Mammary epithelial cell (primary cell): ENCODE measurements at regions of chr2 and their contacts with region 1.

Region 1: DNA sequence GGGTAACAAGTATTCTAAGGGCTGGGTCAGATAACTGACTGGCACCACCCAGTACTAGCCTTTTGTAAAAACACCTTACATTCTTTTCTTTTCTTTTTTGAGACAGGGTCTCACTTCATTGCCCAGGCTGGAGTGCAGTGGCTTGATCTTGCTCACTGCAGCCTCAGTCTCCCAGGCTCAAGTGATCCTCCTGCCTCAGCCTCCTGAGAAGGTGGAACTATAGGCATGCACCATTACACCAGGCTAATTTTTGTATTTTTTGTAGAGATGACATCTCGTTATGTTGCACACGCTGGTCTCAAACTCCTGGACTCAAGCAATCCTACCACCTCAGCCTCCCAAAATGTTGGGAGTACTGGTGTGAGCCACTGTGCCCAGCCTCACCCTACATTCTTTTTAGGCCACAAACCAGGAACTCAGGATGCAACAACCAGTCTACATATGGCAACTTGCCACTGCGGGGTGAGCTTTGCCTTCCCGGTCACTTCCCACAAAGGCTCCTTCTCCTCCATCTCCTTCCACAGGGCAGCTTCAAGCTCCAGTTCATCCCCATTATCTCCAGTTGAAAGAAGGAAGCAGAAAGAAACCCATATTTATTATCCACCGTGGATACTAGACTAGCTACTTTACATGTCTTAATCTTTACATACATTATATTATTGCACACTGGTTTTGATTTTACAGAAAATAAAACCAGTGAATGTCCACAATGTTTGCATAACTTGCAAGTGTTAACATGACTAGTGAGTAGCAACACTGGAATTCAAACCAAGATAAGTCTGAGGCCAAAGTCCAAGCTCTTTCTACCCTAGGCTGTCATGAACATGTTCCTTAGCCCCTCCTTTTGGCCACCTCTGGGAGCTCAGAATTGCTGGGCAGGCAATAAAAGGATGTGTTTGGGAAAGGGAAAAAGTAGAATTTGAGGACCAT is 23.7 kb upstream of the AP1S3 start:
- DNase-seq: peak; percentile 94
- H3K4me3 ChIP-seq: peak overlapping the region in 2 of 3 experiments; percentile 20 to 26
- H3K27ac ChIP-seq: peak overlapping the region; percentile 89
- H3K4me1 ChIP-seq: peaks cover 19% of the 10 kb centered on the region
- H3K27me3 ChIP-seq: no peaks in the 10 kb centered on the region
- CTCF ChIP-seq: peak; percentile 9 to 50

Region 2: DNA sequence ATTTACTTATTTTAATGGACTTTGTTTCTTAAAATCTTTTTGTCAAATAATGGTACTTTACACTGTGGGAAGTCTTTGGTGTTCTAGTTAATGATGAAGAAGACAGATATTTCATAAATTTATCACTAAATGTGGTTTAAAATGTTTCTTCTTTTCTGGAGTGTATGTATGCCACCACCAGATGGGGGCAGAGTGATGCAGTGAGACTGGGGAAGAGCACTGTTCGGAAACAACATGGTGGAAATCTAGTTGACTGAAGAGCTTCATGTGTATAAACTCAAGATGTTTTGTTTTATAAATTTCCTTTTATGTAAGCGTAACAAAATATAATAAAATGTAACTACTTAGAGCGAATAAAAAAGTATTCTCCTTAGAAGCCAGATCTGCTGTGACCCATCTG is 613.9 kb before region 1 on chr2:
- CTCF ChIA-PET with region 1: no interaction called
- dilution Hi-C with region 1: no loop called
- in situ Hi-C with region 1: no loop called
- intact Hi-C with region 1: loop called (anchors 2 kb)
- DNase-seq: peak; percentile 24
- H3K4me3 ChIP-seq: no peak overlapping the region
- H3K27ac ChIP-seq: no peak overlapping the region
- H3K4me1 ChIP-seq: no peaks in the 10 kb centered on the region
- H3K27me3 ChIP-seq: no peaks in the 10 kb centered on the region
- CTCF ChIP-seq: peak; percentile 62 to 73

Region 3: DNA sequence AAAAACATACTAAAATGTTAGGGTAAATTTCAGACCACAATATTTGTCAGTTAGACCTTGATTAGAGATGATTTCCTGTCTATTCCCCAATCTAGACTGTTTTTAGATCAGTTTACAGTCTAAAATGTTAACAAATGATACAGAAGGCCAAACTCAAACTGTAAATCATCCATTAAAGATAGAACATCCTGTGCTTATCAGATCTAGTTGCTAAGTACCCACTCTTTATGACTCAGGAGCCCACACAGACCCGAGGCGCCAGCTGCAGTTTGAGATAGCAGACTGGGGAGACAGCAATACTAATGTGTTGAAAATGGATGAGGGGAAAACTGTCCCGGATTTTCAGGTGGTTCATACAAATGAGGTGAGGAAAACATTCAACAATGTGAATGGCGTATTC is 372.3 kb before region 1 on chr2:
- CTCF ChIA-PET with region 1: no interaction called
- dilution Hi-C with region 1: no loop called
- in situ Hi-C with region 1: no loop called
- intact Hi-C with region 1: no loop called
- DNase-seq: peak; percentile 34
- H3K4me3 ChIP-seq: no peak overlapping the region
- H3K27ac ChIP-seq: no peak overlapping the region
- H3K4me1 ChIP-seq: no peaks in the 10 kb centered on the region
- H3K27me3 ChIP-seq: no peaks in the 10 kb centered on the region
- CTCF ChIP-seq: no peak

Region 4: GRCh38 chr2:223674998-223675609 is 186.0 kb before region 1 on chr2:
- CTCF ChIA-PET with region 1: interaction called, 3 read pairs
- dilution Hi-C with region 1: no loop called
- in situ Hi-C with region 1: no loop called
- intact Hi-C with region 1: loop called (anchors 1 kb)
- DNase-seq: peak; percentile 46
- H3K4me3 ChIP-seq: no peak overlapping the region
- H3K27ac ChIP-seq: no peak overlapping the region
- H3K4me1 ChIP-seq: no peaks in the 10 kb centered on the region
- H3K27me3 ChIP-seq: no peaks in the 10 kb centered on the region
- CTCF ChIP-seq: peak; percentile 81 to 87

Region 5: DNA sequence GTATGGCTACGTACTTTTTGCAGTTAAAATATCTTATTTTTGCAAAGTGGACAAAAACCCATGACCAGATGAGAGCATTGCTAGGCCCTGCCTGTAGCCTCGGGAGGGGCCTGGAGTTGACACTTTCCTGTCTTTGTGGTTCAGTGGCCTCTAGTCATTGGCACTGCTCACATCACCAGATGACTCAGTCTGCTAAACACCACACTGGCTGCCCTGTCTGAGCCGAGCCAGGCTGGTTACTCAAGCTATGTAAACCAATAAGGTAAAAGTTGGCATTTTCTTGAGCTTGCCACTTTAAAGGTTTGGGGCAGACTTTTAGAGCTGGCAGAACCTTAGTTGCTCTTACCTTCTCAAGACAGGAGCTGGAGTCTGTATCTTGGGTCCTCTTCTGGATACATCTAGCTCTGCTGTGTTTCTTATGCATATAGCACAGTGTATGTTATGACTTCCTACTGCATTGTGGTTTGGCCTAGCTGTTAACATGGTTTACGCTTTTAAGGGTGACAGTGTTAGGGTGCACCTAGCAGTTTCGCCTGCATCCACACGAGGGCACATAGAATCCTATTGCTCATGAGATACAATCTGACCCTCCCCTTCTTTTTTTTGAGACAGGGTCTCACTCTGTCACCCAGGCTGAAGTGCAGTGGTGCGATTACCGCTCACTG is 100.1 kb before region 1 on chr2:
- CTCF ChIA-PET with region 1: no interaction called
- dilution Hi-C with region 1: no loop called
- in situ Hi-C with region 1: no loop called
- intact Hi-C with region 1: loop called (anchors 1 kb)
- DNase-seq: peak; percentile 98
- H3K4me3 ChIP-seq: peak overlapping the region in 1 of 3 experiments; percentile 2
- H3K27ac ChIP-seq: peak overlapping the region; percentile 95
- H3K4me1 ChIP-seq: peaks cover 36% of the 10 kb centered on the region
- H3K27me3 ChIP-seq: no peaks in the 10 kb centered on the region
- CTCF ChIP-seq: peak; percentile 39 to 43

Region 6: DNA sequence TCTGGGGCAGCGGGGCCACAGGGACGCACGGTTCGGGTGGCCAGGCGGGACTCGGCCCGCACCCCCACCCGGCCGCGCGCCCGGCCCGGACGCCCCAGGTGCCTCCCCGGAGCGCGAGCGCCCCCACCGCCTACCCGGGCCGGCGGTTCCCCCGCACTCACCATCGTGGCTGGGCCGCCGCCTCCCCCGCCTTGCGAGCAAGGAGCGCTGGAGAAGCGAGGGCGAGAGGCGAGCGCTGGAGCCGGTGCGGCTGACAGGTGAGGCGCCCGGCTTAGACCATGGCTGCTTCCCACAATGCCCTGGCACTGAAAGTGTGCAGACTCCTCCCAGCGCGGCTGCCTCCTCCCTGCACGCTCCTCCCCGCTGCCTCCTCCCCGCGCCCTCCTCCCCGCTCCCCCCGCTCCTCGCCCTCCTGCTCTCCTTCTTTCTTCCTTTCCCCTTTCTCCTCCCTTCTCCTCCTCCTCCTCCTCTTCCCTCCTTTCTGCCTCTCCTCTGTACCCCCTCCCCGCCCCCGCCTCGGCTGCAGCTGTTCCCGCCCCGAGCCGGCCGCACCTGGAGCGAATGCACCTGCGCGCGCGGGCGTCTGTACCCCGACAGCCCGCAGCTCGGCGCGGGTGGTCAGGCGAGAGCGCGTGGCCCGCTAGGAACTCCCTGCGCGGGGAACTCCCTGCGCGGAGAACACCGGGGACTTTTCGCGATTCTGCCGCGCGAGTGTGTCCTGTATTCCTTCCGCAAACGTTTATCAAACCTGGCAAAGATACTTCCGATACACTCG is 23.6 kb before region 1 on chr2 and contains the start of gene AP1S3:
- CTCF ChIA-PET with region 1: no interaction called
- dilution Hi-C with region 1: no loop called
- in situ Hi-C with region 1: no loop called
- intact Hi-C with region 1: loop called (anchors 1 kb)
- DNase-seq: peak; percentile 87
- H3K4me3 ChIP-seq: peak within 1 kb of the TSS; percentile 76 to 92 (median 78)
- H3K27ac ChIP-seq: peak within 1 kb of the TSS; percentile 41
- H3K4me1 ChIP-seq: peaks cover 26% of the 10 kb centered on the region
- H3K27me3 ChIP-seq: no peaks in the 10 kb centered on the region
- CTCF ChIP-seq: no peak
- total RNA-seq, gene AP1S3: 32.0 to 41.1 TPM

Region 7: GRCh38 chr2:223957092-223957851 is 96.2 kb after region 1 on chr2 and contains the start of gene MRPL44:
- CTCF ChIA-PET with region 1: interaction called, 5 read pairs
- dilution Hi-C with region 1: no loop called
- in situ Hi-C with region 1: no loop called
- intact Hi-C with region 1: loop called (anchors 1 kb)
- DNase-seq: peak; percentile 94
- H3K4me3 ChIP-seq: peak within 1 kb of the TSS; percentile 95 to 99 (median 98)
- H3K27ac ChIP-seq: peak within 1 kb of the TSS; percentile 79
- H3K4me1 ChIP-seq: peaks cover 45% of the 10 kb centered on the region
- H3K27me3 ChIP-seq: no peaks in the 10 kb centered on the region
- CTCF ChIP-seq: no peak
- total RNA-seq, gene MRPL44: 24.2 to 27.2 TPM